ENCODE measurements at regions of chr6 and their contacts with region 1.

Region 1: DNA sequence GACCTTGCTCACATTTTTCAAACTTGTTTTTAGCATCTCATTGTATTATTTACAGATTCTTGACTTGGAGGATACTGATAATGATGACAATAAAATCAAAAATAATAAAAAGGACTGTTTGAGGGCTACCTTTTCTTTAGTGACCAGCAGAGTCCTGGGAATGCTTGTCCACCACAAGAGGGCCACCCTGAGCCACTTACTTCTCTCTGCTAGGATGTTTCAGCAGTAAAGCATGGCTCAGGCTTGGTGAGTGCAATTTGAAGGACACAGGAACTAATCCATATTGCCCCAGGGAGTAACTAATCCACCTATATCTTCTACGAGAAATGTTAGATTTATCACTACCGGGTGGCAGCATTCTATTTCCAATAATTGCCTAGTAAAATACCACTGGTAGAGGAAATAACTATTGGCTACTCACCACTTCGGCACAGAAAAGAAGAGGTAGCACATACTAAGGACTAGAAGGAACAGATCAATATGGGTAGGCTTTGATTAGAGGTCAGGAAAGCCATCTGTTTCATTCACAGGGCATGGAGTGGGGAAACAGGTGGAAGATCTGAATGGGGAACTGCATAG is 5.8 kb upstream of the KIAA0408 start:
- DNase-seq: peak; percentile 68
- H3K4me3 Mint-ChIP-seq: no peak overlapping the region
- H3K27ac Mint-ChIP-seq: no peak overlapping the region
- H3K4me1 Mint-ChIP-seq: no peaks in the 10 kb centered on the region
- H3K27me3 Mint-ChIP-seq: no peaks in the 10 kb centered on the region
- CTCF ChIP-seq: peak; percentile 77

Region 2: DNA sequence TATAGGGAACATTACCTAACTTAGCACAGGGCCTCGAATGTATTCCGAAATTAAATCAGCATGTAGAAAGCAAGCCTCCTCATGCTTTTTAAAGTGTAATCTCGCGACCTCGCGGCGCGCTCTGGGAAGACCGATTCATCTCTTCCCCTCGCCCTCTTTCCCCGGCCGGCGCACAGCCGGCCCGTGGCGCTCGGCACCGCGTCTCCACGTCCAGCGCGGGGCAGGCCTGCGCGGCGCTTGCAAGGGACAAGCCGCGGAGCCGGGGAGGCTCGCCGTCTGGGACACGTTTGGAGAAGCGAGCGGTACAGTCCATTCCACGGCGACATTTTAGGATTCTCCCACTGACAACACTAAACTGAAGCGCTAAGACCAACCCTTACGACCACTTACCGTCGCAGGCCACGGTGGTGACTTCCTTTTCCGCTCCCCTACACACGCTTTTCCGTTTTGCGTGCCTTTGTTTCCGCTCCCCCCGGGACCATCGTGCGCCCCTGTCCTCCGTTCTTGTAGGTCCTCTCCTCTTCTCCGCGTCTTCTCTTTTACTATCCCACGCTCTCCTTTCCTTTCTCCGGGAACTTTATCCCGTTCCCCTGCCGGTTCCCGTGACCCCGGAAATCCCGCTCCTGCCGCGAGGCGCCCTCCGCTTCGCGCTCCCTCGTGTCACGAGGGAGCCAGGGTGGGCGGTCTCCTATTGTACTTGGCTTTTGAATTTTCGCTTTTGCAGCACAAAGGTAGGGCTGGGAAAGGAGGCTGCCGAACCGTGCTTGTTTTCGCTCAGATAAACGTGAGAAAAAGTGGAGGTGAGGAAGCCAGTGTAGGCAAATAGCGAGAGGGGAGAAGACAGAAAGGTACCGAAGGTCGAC is 121.8 kb before region 1 on chr6 and contains the start of gene ECHDC1:
- CTCF ChIA-PET with region 1: interaction called, 3 read pairs
- POLR2A ChIA-PET with region 1: interaction called, 3 read pairs
- intact Hi-C with region 1: loop called (anchors 10 kb)
- DNase-seq: peak; percentile 70
- H3K4me3 Mint-ChIP-seq: no peak within 1 kb of the TSS
- H3K27ac Mint-ChIP-seq: no peak within 1 kb of the TSS
- H3K4me1 Mint-ChIP-seq: peaks cover 37% of the 10 kb centered on the region
- H3K27me3 Mint-ChIP-seq: no peaks in the 10 kb centered on the region
- CTCF ChIP-seq: no peak
- total RNA-seq, gene ECHDC1: 60.4 and 70.7 TPM in 2 replicates

Region 3: DNA sequence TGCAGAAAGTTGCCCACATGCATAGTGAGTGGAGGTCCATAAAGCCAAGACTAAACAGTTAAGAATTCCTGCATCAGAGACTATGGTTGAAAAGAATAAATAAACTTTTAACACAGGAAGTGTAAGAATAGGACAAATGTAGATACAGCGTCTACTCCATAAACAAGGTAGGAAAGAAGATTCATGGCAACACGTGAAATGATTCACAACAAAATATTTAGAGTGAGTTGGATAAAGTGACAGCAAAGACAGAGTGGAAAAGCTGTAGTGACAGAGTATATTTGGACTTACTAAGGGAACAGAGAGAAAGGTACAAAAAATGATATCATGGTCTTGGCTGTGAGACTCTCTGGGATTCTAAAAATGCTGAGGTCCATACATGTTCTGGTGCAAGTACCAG is 16.1 kb after region 1 on chr6:
- CTCF ChIA-PET with region 1: interaction called, 10 read pairs
- POLR2A ChIA-PET with region 1: no interaction called
- intact Hi-C with region 1: no loop called
- DNase-seq: no peak
- H3K4me3 Mint-ChIP-seq: no peak overlapping the region
- H3K27ac Mint-ChIP-seq: no peak overlapping the region
- H3K4me1 Mint-ChIP-seq: peaks cover 33% of the 10 kb centered on the region
- H3K27me3 Mint-ChIP-seq: no peaks in the 10 kb centered on the region
- CTCF ChIP-seq: no peak

Region 4: DNA sequence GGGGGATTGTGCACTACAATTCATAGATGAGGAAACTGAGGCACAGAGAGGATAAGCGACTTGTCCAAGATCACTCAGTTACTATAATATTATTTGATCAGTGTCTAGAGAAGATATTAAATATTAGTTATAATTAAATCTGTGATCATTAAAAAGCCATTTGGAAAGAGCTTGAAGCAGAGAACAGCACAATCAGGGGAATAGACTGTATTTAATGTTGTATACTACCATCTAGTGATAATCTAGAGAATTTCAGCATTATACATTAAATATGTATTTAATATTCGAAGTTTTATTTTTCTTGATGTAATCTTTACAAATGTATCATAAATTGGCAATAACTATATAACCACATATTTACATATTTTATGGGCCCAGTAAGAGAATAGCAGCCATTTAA is 74.3 kb after region 1 on chr6:
- CTCF ChIA-PET with region 1: interaction called, 92 read pairs
- POLR2A ChIA-PET with region 1: interaction called, 3 read pairs
- intact Hi-C with region 1: loop called (anchors 1 kb)
- DNase-seq: peak; percentile 14
- H3K4me3 Mint-ChIP-seq: no peak overlapping the region
- H3K27ac Mint-ChIP-seq: no peak overlapping the region
- H3K4me1 Mint-ChIP-seq: peaks cover 5% of the 10 kb centered on the region
- H3K27me3 Mint-ChIP-seq: peaks cover 36% of the 10 kb centered on the region
- CTCF ChIP-seq: peak; percentile 27